ENCODE measurements at regions of chr6 and their contacts with region 1.

Region 1: DNA sequence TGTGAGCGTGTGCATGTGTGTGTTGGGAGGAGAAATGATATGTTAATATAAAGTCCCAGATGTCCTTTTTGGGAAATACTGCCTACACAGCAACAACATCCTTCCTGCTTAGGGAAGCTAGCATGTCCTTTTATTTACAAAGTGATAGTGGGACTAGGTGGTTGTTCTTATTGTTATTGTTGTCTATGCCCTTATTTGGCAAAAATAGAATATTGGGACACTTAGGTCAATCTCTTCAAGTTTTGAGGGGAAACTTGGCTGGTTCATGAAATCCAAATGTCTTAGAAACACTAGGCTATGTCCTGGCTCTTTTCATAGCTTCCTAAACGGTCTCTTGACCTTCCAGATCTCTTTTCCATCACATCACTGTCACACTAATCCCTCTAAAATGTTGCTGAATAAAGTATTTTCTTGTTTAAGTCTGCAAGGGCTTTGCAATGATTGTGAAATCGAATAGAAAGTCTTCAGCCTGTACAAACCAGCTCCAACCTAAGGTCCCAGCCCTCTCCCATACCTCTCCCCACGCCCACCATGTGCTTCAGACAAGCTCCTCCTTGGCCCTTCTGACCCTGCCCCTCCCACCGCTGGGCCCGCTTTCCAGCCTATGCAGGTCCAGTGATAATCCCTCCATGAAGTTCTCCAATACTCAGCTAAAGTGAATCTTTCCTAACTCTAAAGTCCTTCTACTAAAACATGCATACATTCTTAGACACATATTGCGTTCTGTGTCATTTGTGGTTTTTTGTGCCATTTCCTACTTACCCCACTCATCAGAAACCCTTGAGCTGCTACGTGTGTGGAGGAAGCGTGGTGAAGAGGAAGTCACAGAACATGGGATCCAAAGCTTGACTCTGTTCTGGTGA is 205.1 kb downstream of the LY86 start:
- DNase-seq: no peak
- ATAC-seq: peak; percentile 78
- H3K4me3 ChIP-seq: no peak overlapping the region
- H3K4me3 Mint-ChIP-seq: peak overlapping the region in 4 of 10 donors; percentile 3 to 37 (median 24)
- H3K27ac ChIP-seq: no peak overlapping the region
- H3K27ac Mint-ChIP-seq: peak overlapping the region in 2 of 9 donors; percentile 6 to 37
- H3K4me1 ChIP-seq: no peaks in the 10 kb centered on the region
- H3K4me1 Mint-ChIP-seq: peaks cover 5 to 52% (median 7%) of the 10 kb centered on the region in 7 donors
- H3K27me3 ChIP-seq: no peaks in the 10 kb centered on the region
- H3K27me3 Mint-ChIP-seq: no peaks in the 10 kb centered on the region

Region 2: GRCh38 chr6:5537967-5538366 is 1255.7 kb before region 1 on chr6:
- CTCF ChIA-PET with region 1: no interaction called
- POLR2A ChIA-PET with region 1: no interaction called
- intact Hi-C with region 1: no loop called
- DNase-seq: no peak
- ATAC-seq: no peak
- H3K4me3 ChIP-seq: no peak overlapping the region
- H3K4me3 Mint-ChIP-seq: peak overlapping the region in 1 of 10 donors; percentile 1
- H3K27ac ChIP-seq: no peak overlapping the region
- H3K27ac Mint-ChIP-seq: peak overlapping the region in 1 of 9 donors; percentile 53
- H3K4me1 ChIP-seq: no peaks in the 10 kb centered on the region
- H3K4me1 Mint-ChIP-seq: peaks cover 0 to 15% (median 6%) of the 10 kb centered on the region in 7 donors
- H3K27me3 ChIP-seq: no peaks in the 10 kb centered on the region
- H3K27me3 Mint-ChIP-seq: no peaks in the 10 kb centered on the region

Region 3: GRCh38 chr6:6856538-6857523 is 63.2 kb after region 1 on chr6:
- CTCF ChIA-PET with region 1: no interaction called
- POLR2A ChIA-PET with region 1: no interaction called
- intact Hi-C with region 1: loop called in 1 of 2 experiments (anchors 10 kb)
- DNase-seq: peak; percentile 13 to 59 (median 36)
- ATAC-seq: peak; percentile 80
- H3K4me3 ChIP-seq: peak overlapping the region; percentile 15
- H3K4me3 Mint-ChIP-seq: peak overlapping the region; percentile 31 to 83 (median 76)
- H3K27ac ChIP-seq: no peak overlapping the region
- H3K27ac Mint-ChIP-seq: peak overlapping the region; percentile 22 to 91 (median 65)
- H3K4me1 ChIP-seq: peaks cover 0 to 7% of the 10 kb centered on the region in 2 donors
- H3K4me1 Mint-ChIP-seq: peaks cover 14 to 24% (median 23%) of the 10 kb centered on the region in 7 donors
- H3K27me3 ChIP-seq: no peaks in the 10 kb centered on the region
- H3K27me3 Mint-ChIP-seq: peaks cover 0 to 5% (median 0%) of the 10 kb centered on the region in 5 donors

Region 4: GRCh38 chr6:7058250-7058923 is 264.8 kb after region 1 on chr6:
- CTCF ChIA-PET with region 1: no interaction called
- POLR2A ChIA-PET with region 1: no interaction called
- intact Hi-C with region 1: loop called in 1 of 2 experiments (anchors 10 kb)
- DNase-seq: no peak
- ATAC-seq: no peak
- H3K4me3 ChIP-seq: no peak overlapping the region
- H3K4me3 Mint-ChIP-seq: no peak overlapping the region
- H3K27ac ChIP-seq: no peak overlapping the region
- H3K27ac Mint-ChIP-seq: no peak overlapping the region
- H3K4me1 ChIP-seq: no peaks in the 10 kb centered on the region
- H3K4me1 Mint-ChIP-seq: peaks cover 0 to 18% (median 7%) of the 10 kb centered on the region in 7 donors
- H3K27me3 ChIP-seq: no peaks in the 10 kb centered on the region
- H3K27me3 Mint-ChIP-seq: peaks cover 0 to 57% (median 0%) of the 10 kb centered on the region in 5 donors